Cardiac septum (tissue), 1 donor: ENCODE measurements at regions of chr10 and their contacts with region 1.

Region 1: DNA sequence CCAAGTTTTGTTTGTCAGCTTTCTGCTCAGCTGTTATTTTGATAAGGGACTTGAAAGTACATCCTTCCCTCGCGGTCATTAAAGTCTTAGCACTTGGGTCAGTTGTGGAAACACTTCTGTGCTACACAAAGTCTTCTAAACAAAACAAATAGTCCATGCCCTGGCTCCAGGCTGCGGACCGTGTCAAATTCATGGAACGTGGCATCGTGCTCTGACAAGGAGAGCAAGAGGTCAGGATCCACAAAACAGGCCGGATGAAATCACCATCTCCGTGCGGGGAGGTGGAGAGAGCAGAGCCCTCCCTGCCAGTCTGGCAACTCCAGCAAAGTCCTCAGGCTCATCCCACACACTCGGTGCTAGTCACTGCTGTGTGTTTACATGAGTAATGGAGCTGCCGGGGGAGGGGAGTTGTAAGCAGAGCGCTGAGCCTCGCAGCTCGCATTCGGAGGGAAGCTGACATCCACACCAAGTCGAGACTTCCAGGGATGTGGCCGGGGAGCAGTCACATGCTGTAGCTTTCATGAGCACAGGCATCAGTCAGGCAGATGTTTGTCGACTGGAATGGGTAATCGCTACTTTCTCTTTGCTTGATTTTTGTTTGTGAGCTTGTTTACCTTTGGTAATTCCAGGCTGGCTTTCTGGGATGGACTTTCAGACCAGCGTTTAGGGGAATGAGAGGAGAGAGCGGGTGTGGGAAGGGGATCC is 147.6 kb downstream of the ARID5B start:
- DNase-seq: peak; percentile 92

Region 2: GRCh38 chr10:61992671-61993668 is 56.1 kb before region 1 on chr10:
- intact Hi-C with region 1: loop called (anchors 5 kb)
- DNase-seq: no peak

Region 3: DNA sequence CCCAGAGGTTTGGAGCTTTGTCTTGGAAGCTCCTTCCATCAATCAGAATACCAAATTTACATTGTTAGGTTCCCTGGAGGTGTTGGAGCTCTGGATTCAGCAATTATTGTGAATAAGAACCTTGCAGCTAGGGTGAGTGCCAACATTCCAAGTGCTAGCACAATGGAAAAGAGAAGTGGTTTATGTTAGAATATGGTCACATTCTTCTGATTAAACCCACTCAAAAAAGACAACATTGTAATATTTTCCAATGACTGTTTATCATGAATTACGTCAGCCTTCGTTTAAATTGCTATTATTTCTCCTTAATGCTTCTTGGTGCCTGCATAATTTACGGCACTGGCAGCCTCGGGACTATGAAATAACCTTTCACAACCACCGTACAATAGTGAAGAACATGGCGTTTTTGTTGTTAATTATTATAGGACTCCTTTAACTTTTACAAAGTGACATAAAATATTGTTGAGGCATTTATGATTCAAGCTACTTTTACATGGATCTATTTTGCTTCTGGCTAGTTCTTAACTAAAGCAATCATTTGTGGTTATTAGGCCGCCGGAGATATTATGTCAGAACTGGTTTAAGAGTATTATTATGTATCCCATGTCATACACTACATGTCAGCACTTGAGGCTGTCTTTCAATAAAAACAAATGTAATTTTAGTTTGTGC is 29.9 kb before region 1 on chr10:
- intact Hi-C with region 1: no loop called
- DNase-seq: no peak

Region 4: GRCh38 chr10:62082729-62083411 is 33.8 kb after region 1 on chr10:
- intact Hi-C with region 1: loop called (anchors 2 kb)
- DNase-seq: no peak

Region 5: DNA sequence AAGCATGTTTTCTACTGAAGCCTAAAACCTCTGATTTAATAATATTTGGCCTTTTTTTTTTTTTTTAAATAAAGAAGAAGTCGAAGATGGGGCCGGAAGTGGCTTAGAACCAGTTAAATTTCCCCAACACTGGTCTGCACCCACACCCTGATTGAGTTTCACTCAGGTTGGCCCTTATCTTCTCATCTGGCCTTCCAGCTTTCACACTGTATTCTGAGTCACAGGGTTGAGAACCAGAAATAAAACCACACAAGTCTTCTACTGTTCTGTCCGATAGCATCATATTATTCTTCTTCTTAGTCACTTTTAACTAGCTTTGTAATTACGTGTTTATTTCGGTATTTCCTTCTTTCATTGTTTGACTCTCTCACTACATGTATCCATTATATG is 335.0 kb after region 1 on chr10:
- intact Hi-C with region 1: loop called (anchors 10 kb)
- DNase-seq: no peak